Lower leg skin (tissue), 4 donors: ENCODE measurements at regions of chr2 and their contacts with region 1.

Region 1: DNA sequence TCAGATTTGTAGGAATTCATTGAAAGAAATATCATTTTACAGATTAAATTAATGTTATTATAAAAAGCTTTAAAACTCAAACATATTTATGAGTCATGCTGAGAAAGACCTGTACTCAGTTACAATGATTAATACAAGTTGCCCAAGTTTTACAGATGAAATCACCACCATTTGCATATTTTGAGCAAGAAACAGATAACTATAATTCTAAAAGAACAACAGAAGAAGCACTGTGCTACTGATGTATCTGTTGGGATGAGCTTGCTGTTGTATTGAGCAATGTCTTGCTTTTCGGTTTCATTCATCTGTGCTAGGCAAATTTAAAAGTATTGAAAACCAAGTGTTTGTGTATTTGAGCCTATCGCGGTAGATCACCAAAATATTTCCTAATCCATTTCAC is 1589.1 kb upstream of the ZEB2 start:
- DNase-seq: no peak
- H3K4me3 ChIP-seq: no peak overlapping the region
- CTCF ChIP-seq: no peak
- POLR2A ChIP-seq: no peak

Region 2: DNA sequence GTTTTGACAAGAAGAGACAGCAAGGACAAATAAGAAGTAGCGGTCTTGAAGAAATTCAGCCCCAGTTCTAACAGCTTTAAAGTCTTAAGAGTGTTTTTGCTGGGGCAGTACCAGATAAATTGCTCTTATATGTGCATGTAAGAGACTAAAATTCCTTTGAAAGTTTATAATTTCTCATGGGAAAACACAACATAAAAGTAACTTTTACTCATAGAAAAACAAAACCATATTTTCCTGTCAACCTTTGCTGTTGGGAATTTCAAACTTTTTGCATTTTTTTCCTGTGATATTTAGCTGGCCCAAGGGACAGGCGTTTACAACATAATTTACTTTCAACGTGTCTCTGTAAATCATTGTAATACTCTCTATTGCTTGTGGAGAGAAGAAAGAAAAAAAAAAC is 821.3 kb before region 1 on chr2:
- intact Hi-C with region 1: no loop called
- DNase-seq: no peak
- H3K4me3 ChIP-seq: no peak overlapping the region
- CTCF ChIP-seq: no peak
- POLR2A ChIP-seq: no peak

Region 3: DNA sequence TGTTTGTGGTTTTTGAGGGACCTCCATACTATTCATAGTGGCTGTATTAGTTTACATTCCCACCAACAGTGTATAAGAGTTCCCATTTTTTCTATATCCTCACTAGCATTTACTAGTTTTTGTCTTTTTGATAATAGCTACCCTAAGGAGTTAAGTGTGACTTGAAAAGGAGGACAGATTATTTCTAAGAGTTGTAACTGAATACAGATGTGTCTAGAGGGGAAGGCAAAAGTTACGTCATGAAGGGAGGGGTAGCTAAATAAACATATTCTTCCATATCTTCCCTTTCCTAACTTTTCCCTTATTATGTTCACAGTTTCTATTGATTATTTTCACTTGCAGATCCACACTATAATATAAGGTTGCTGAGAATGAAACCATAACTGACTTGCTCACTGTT is 273.3 kb before region 1 on chr2:
- intact Hi-C with region 1: no loop called
- DNase-seq: no peak
- H3K4me3 ChIP-seq: no peak overlapping the region
- CTCF ChIP-seq: no peak
- POLR2A ChIP-seq: no peak

Region 4: DNA sequence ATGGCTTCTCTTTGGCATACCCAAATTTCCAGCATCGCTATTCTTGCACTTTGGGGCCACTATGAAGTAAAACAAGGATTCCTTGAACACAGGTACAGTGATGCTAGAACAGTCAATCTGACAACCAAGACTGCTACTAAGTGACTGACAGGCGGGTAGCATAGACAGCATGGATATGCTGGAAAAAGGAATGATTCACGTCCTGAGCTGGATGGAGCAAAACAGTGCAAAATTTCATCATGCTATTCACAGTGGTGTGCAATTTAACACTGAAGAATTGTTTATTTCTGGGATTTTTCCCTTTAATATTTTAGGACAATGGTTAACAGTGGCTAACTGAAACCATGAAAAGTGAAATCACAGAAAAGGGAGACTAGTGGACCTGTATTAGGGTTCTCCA is 77.8 kb before region 1 on chr2:
- intact Hi-C with region 1: no loop called
- DNase-seq: no peak
- H3K4me3 ChIP-seq: no peak overlapping the region
- CTCF ChIP-seq: no peak
- POLR2A ChIP-seq: no peak

Region 5: GRCh38 chr2:146119586-146119985 is 10.6 kb after region 1 on chr2:
- intact Hi-C with region 1: loop called (anchors 1 kb)
- DNase-seq: no peak
- H3K4me3 ChIP-seq: no peak overlapping the region
- CTCF ChIP-seq: no peak
- POLR2A ChIP-seq: no peak

Region 6: DNA sequence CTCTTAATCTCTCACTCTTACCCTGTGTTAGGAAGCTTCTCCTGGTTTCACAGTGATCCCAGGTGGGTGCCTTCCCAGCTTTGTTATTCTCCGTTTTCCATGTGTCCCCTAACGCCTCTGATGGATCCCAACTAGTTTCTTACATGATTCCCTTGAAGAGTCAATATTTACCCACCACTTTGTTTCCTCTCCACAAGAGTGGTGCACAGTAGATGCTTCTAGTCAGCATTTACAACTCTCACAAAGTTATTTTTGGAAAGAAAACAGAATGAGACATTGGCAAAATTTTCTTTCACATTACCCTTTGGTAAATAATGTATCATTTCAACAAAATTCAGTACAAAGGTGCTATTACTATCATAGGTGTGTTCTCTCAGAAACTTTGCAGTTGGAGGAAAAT is 22.1 kb after region 1 on chr2:
- intact Hi-C with region 1: no loop called
- DNase-seq: no peak
- H3K4me3 ChIP-seq: no peak overlapping the region
- CTCF ChIP-seq: no peak
- POLR2A ChIP-seq: no peak